Ascending aorta (tissue), 2 donors: ENCODE measurements at regions of chr12 and their contacts with region 1.

Region 1: DNA sequence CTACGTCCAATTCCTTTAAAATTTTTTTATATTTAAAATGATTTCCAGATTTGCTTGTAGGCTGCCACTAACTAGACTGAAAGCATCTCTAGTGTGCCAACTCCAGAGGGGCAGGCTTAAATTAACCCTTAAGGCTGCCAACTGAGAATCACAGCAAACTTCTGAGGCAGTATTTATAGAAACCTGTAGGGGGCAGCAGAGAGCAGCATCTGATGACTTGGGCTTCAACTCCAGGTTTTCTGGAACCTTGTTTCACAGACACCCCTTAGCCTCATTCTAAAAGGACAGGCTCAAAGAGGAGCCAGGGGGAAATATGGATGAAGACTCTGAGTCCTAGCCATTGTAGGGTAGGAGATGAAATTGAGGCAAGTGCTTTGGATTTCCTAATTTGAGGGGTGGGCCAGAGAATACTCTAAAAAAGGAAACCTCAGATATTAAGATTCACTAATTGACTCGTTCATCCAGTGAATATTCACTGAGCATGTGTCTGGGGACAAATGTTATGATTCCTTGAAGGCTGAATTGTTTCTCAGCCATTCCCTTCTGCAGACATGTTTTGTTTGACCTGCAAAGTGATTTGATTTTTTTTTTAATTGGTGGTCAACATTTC is 63.3 kb upstream of the HSPB8 start:
- DNase-seq: peak in 1 of 2 donors; percentile 66
- H3K4me3 ChIP-seq: no peak overlapping the region
- H3K27ac ChIP-seq: no peak overlapping the region
- H3K4me1 ChIP-seq: no peaks in the 10 kb centered on the region
- H3K27me3 ChIP-seq: no peaks in the 10 kb centered on the region
- CTCF ChIP-seq: peak; percentile 73 to 95 (median 93)

Region 2: DNA sequence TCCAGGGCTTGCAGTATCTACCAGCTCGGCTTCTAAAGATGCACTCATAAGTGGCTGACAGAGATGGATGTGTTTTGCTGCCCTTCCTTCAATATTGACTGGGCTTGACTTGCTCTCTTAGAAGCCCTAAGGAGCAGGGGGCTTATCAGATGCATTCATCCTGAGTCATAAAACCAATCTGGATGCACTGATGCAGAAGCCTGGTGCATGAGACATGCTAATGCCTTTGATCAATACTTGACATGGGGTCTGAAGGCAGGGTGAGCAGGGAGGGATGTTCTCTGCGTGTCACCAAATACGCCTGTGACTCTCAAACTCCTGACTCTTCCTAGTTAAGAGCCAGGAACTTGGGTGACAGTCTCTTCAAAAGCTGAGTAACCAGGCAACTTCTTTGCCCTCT is 14.5 kb before region 1 on chr12:
- intact Hi-C with region 1: no loop called
- DNase-seq: no peak
- H3K4me3 ChIP-seq: no peak overlapping the region
- H3K27ac ChIP-seq: no peak overlapping the region
- H3K4me1 ChIP-seq: no peaks in the 10 kb centered on the region
- H3K27me3 ChIP-seq: no peaks in the 10 kb centered on the region
- CTCF ChIP-seq: no peak

Region 3: GRCh38 chr12:119274636-119275065 is 159.2 kb after region 1 on chr12:
- intact Hi-C with region 1: loop called (anchors 2 kb)
- DNase-seq: no peak
- H3K4me3 ChIP-seq: no peak overlapping the region
- H3K27ac ChIP-seq: no peak overlapping the region
- H3K4me1 ChIP-seq: no peaks in the 10 kb centered on the region
- H3K27me3 ChIP-seq: no peaks in the 10 kb centered on the region
- CTCF ChIP-seq: no peak

Region 4: DNA sequence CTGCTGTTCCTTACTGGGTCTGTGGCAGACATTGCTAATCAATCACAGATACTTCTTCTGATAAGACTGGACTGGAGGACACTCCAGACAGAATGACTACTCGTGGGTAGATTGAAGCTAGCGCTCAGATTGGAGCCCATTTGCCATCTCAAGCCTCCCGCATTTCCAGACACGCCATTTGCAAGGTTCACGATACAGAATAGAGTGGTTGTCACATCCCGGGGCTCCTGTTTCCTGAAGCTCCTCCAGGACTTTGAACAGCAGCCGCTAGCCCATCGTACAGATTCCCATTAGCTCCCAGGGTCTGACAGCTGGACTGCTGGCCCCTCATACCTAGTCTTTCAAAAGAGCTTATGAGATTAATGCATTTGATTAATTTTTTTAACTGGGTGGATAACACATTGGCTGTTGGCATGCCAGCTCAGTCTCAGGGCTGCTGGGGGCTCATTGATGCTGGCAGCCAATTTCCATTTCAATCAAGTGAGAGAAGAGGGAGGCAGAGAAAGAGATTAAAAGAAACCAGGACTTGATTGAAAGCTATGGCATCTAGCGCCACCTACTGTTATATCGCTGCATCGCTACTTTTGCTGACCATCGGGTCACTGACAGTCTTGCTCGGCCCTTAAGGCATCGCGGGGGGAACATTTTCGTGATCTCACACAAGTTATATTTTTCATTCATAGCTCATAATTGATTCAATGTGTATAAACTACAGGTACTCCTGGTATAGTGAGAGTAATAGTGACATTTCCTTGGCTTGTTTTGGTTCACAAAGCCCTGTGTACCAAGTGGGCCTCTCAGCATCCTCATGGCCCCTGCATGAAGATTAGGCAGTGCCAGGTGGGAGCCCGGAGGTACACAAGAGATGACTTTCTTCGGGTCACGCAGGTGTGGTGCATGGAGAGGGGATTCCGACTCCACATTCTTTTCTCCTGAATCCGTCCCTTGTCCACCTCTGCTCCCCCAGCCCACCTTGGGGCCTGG is 297.7 kb after region 1 on chr12:
- intact Hi-C with region 1: loop called (anchors 1 kb)
- DNase-seq: peak in 1 of 2 donors; percentile 75
- H3K4me3 ChIP-seq: no peak overlapping the region
- H3K27ac ChIP-seq: no peak overlapping the region
- H3K4me1 ChIP-seq: peaks cover 0 to 3% of the 10 kb centered on the region in 2 donors
- H3K27me3 ChIP-seq: no peaks in the 10 kb centered on the region
- CTCF ChIP-seq: peak; percentile 64 to 85 (median 83)

Region 5: DNA sequence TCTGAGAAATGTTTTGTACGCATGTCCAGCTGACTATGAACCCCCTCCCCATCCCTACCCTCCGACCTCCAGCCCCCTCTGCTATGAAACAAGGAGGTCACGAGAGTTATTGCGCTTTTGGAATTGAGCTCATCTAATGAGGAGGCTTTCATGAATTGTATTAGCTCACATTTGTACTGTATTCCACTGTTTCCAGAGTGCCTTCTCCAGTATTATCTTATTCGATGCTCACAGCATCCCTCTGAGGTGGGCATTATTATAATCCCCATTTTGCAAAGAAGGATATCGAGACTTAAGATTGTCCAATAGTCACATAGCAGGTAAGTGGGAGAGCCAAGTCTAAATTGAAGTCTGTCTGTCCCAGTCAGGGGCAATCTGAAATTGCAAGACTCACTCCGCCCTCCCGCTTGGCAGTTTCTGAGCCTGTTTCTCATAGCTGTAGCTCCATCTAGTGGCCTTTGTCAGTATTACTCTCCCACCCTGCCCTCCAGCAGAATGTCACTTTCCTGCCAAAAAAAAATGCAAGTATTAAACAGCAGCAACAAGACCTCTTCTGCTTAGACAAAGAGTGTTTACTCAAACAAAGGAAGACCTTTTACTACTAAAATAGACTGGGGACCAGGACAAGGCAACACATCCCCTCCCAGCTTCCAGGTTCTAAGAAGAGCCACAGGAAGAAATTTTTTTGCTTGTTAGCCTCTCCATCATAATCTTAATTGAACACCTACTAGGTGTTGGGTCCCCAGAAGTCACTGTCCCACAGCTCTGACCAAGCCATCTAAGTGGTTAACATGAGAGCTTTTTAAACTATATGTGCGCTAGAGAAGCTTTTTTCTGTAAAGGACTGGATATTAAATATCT is 429.6 kb after region 1 on chr12:
- intact Hi-C with region 1: loop called (anchors 10 kb)
- DNase-seq: peak in 1 of 2 donors; percentile 65
- H3K4me3 ChIP-seq: no peak overlapping the region
- H3K27ac ChIP-seq: no peak overlapping the region
- H3K4me1 ChIP-seq: no peaks in the 10 kb centered on the region
- H3K27me3 ChIP-seq: no peaks in the 10 kb centered on the region
- CTCF ChIP-seq: peak; percentile 31 to 71 (median 61)